Cardiac septum (tissue), 1 donor: ENCODE measurements at regions of chr10 and their contacts with region 1.

Region 1: GRCh38 chr10:132452631-132453469 is 55.9 kb downstream of the PWWP2B start:
- DNase-seq: peak; percentile 90

Region 2: GRCh38 chr10:132264966-132265901 is 187.6 kb before region 1 on chr10:
- intact Hi-C with region 1: no loop called
- DNase-seq: no peak

Region 3: GRCh38 chr10:132387764-132388210 is 65.1 kb before region 1 on chr10:
- intact Hi-C with region 1: loop called (anchors 1 kb)
- DNase-seq: peak; percentile 87

Region 4: GRCh38 chr10:132551093-132551807 is 98.4 kb after region 1 on chr10:
- intact Hi-C with region 1: no loop called
- DNase-seq: no peak